OCI-LY7 (cell line): ENCODE measurements at regions of chr20 and their contacts with region 1.

Region 1: GRCh38 chr20:32368925-32369324 is 10.8 kb downstream of the ASXL1 start:
- DNase-seq: peak; percentile 38
- H3K4me3 ChIP-seq: peak overlapping the region; percentile 30
- H3K27ac ChIP-seq: peak overlapping the region; percentile 49
- H3K4me1 ChIP-seq: peaks cover 58% of the 10 kb centered on the region
- CTCF ChIP-seq: no peak

Region 2: GRCh38 chr20:32183947-32184635 is 184.8 kb before region 1 on chr20:
- CTCF ChIA-PET with region 1: no interaction called
- POLR2A ChIA-PET with region 1: no interaction called
- intact Hi-C with region 1: no loop called
- DNase-seq: no peak
- H3K4me3 ChIP-seq: no peak overlapping the region
- H3K27ac ChIP-seq: no peak overlapping the region
- H3K4me1 ChIP-seq: no peaks in the 10 kb centered on the region
- CTCF ChIP-seq: no peak

Region 3: GRCh38 chr20:32357869-32358631 is 10.9 kb before region 1 on chr20 and contains the start of gene ASXL1:
- CTCF ChIA-PET with region 1: no interaction called
- POLR2A ChIA-PET with region 1: interaction called, 11 read pairs
- intact Hi-C with region 1: no loop called
- DNase-seq: peak; percentile 98
- H3K4me3 ChIP-seq: peak within 1 kb of the TSS; percentile 87
- H3K27ac ChIP-seq: peak within 1 kb of the TSS; percentile 75
- H3K4me1 ChIP-seq: peaks cover 63% of the 10 kb centered on the region
- CTCF ChIP-seq: no peak
- total RNA-seq, gene ASXL1: 81.5 and 84.7 TPM in 2 replicates

Region 4: GRCh38 chr20:32385541-32385940 is 16.6 kb after region 1 on chr20:
- CTCF ChIA-PET with region 1: no interaction called
- POLR2A ChIA-PET with region 1: interaction called, 4 read pairs
- intact Hi-C with region 1: loop called (anchors 1 kb)
- DNase-seq: no peak
- H3K4me3 ChIP-seq: no peak overlapping the region
- H3K27ac ChIP-seq: no peak overlapping the region
- H3K4me1 ChIP-seq: no peaks in the 10 kb centered on the region
- CTCF ChIP-seq: no peak

Region 5: GRCh38 chr20:33005132-33005566 is 636.2 kb after region 1 on chr20:
- CTCF ChIA-PET with region 1: no interaction called
- POLR2A ChIA-PET with region 1: no interaction called
- intact Hi-C with region 1: no loop called
- DNase-seq: peak; percentile 41
- H3K4me3 ChIP-seq: no peak overlapping the region
- H3K27ac ChIP-seq: no peak overlapping the region
- H3K4me1 ChIP-seq: no peaks in the 10 kb centered on the region
- CTCF ChIP-seq: peak; percentile 81